Gastrocnemius medialis (tissue), 4 donors: ENCODE measurements at regions of chr2 and their contacts with region 1.

Region 1: DNA sequence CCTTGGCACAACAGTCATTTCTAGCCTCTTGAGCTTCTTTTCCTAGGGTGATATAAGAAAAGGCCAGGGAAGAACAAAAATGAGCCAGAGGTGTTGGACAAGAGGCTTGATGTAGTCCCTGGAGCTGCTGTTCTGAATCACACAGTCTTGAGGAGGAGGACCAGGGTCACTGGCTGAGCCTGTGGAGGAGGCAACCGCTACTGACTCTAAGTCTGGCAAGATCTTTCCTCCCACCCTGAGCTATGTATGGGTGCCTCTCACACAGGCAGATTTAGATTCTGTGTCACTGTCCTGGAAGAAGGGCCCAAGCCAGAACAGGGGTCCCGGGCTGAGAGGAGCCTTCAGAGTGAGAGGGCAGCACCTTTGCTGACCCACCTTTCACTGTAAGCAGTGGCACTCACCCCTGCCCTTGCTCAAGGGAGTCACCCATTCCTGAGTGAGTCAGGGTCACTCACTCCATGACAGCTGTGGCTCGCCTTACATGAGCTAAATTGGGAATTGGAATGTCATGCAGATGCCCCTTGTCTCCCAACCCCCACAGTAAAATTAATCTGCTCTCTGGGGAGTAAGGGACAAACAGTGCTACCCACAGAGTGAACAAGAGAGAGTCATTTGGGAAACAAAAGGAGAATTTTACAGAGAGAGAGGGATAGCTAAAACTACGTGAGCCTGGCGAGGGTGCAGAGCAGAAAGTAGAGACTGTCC is at the start of gene TRIM54:
- DNase-seq: peak; percentile 89 to 96
- ATAC-seq: peak; percentile 75 to 77
- H3K4me3 ChIP-seq: peak within 1 kb of the TSS; percentile 59 to 84 (median 75)
- H3K27ac ChIP-seq: peak within 1 kb of the TSS; percentile 88 to 99 (median 98)
- H3K4me1 ChIP-seq: peaks cover 29 to 30% of the 10 kb centered on the region in 2 donors
- H3K27me3 ChIP-seq: no peaks in the 10 kb centered on the region
- CTCF ChIP-seq: peak in 1 of 5 experiments; percentile 23
- POLR2A ChIP-seq: peak; percentile 89 to 94
- total RNA-seq, gene TRIM54: 219 to 554 (median 427) TPM

Region 2: DNA sequence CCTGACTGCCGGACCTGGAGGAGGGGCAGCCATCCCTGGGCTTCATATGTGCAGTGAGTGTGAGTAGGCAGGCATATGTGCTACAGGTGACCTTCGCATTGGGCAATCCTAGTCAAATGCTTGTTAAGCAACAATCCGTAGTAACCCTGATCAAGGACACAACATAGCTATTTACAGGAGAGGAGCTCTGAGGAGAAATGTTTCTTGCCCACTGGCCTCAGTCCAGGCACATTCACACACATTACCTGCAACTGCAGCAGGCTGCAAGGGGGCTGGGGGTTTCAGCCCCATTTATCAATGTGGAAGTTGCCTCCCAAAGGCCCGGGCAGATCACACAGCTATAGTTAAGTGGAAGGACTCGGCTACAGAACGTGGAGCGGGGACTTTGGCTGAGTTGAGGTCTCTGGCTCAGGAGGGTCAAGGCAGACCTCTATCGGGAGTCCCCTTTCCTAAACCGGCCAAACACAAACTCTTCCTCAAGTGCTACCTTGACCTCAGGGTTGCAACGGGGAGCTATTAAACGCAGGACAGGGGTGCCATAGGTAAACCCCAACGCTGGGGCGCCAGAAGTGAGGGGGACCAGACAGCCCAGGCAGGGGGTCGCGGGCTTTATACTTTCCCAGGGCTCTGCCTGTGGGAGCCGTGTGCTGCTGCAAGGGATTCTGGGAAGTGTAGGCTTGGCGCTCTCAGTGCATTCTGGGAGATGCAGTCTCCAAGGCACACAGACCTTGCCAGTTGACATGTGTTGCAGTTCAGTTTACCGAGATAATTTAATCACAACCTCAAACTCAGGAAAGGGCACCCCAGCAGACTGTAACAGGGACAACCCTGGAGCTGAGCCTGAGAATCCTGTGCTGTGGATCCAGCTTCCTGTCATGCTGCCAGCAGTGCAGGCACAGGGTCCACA is 186.0 kb before region 1 on chr2:
- in situ Hi-C with region 1: loop called in 3 of 4 experiments (anchors 10 kb)
- intact Hi-C with region 1: no loop called
- DNase-seq: peak; percentile 50 to 72
- ATAC-seq: peak; percentile 86 to 93
- H3K4me3 ChIP-seq: peak overlapping the region; percentile 41 to 59 (median 54)
- H3K27ac ChIP-seq: peak overlapping the region; percentile 69 to 78 (median 71)
- H3K4me1 ChIP-seq: peaks cover 5 to 8% of the 10 kb centered on the region in 2 donors
- H3K27me3 ChIP-seq: no peaks in the 10 kb centered on the region
- CTCF ChIP-seq: no peak
- POLR2A ChIP-seq: no peak

Region 3: DNA sequence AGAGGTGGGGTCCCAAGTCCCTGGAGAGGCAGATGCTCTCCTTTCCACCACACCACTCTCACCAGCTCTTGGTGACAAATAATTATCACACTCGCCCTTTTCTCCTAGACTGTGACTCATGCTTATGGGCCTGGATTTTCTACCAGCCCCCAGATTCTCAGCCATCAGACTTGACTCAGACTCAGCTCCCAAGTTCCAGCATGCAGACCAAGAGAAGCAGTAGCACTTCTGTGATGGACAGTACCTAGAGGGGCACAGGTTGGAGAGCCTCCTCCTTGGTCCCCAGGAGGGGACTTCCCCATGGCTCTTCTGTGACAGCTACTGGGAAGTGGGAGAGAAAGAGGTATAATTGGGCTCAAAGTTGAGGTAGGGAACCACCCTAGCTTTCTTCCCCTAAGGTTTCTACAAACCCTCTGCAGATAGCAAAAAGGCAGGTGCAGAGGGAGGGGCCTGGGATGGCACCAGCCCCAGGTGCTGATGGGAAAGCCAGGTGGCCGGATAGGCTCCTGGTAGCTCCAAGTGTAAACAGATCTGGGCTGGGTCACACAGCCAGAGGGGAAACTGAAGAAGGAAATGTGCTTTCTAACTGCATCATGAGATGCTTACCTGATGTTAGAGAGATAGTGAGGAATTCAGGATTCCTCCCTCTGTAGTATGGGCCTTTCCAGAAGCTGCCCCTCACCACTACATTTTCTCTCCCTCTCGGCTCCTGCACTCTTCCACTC is 129.1 kb before region 1 on chr2:
- in situ Hi-C with region 1: no loop called
- intact Hi-C with region 1: no loop called
- DNase-seq: no peak
- ATAC-seq: no peak
- H3K4me3 ChIP-seq: no peak overlapping the region
- H3K27ac ChIP-seq: no peak overlapping the region
- H3K4me1 ChIP-seq: no peaks in the 10 kb centered on the region
- H3K27me3 ChIP-seq: no peaks in the 10 kb centered on the region
- CTCF ChIP-seq: no peak
- POLR2A ChIP-seq: no peak

Region 4: DNA sequence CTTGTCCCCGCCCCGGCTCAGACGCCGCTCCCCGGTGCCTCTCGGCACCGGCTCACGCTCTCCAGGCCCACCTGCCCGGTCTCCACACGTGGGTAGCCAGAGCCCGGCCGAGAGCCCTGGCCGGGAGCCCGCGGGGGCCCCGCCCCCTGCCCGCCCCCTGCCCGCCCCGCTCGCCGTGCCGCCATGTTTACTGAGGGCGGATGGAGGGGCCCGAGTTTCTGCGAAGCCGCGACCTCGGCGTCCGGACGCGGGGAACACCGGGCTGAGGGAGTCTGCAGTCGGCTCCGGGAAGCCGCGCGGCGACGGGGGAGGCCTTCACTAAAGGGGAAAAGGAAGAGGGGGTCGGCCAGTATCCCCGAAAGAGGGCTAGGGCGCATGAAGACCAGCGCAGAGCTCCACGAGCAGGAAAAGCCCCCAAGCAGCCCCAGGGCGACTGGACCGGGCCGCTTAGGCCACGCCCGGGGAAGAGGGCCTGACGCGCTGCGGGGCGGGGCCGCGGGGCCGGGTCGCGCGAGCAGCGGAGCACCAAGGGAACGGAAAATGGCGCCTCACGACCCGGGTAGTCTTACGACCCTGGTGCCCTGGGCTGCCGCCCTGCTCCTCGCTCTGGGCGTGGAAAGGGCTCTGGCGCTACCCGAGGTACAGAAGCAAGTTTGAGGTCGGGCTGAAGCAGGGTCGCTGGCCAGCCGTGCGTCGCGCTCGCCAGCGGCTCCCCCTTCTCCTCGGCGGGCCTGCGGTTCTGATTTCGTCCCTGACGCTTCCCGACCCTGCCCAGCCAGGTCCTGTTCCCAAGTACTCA is 70.0 kb before region 1 on chr2 and contains the starts of genes ATRAID and SLC5A6:
- in situ Hi-C with region 1: no loop called
- intact Hi-C with region 1: loop called (anchors 5 kb)
- DNase-seq: peak; percentile 81 to 84
- ATAC-seq: peak; percentile 90 to 92
- H3K4me3 ChIP-seq: peak within 1 kb of the TSS; percentile 83 to 94 (median 87)
- H3K27ac ChIP-seq: peak within 1 kb of the TSS; percentile 94 to 99 (median 98)
- H3K4me1 ChIP-seq: peaks cover 15 to 18% of the 10 kb centered on the region in 2 donors
- H3K27me3 ChIP-seq: no peaks in the 10 kb centered on the region
- CTCF ChIP-seq: no peak
- POLR2A ChIP-seq: peak; percentile 87 to 89
- total RNA-seq, gene ATRAID: 131 to 203 (median 171) TPM
- total RNA-seq, gene SLC5A6: 19.0 to 46.5 (median 32.5) TPM

Region 5: GRCh38 chr2:27264753-27265535 is 17.1 kb before region 1 on chr2:
- in situ Hi-C with region 1: no loop called
- intact Hi-C with region 1: loop called (anchors 1 kb)
- DNase-seq: no peak
- ATAC-seq: peak; percentile 29 to 34
- H3K4me3 ChIP-seq: peak overlapping the region; percentile 18 to 78 (median 46)
- H3K27ac ChIP-seq: no peak overlapping the region
- H3K4me1 ChIP-seq: peaks cover 25 to 26% of the 10 kb centered on the region in 2 donors
- H3K27me3 ChIP-seq: peaks cover 65 to 68% (median 66%) of the 10 kb centered on the region in 3 donors
- CTCF ChIP-seq: peak; percentile 39 to 60 (median 46)
- POLR2A ChIP-seq: no peak

Region 6: DNA sequence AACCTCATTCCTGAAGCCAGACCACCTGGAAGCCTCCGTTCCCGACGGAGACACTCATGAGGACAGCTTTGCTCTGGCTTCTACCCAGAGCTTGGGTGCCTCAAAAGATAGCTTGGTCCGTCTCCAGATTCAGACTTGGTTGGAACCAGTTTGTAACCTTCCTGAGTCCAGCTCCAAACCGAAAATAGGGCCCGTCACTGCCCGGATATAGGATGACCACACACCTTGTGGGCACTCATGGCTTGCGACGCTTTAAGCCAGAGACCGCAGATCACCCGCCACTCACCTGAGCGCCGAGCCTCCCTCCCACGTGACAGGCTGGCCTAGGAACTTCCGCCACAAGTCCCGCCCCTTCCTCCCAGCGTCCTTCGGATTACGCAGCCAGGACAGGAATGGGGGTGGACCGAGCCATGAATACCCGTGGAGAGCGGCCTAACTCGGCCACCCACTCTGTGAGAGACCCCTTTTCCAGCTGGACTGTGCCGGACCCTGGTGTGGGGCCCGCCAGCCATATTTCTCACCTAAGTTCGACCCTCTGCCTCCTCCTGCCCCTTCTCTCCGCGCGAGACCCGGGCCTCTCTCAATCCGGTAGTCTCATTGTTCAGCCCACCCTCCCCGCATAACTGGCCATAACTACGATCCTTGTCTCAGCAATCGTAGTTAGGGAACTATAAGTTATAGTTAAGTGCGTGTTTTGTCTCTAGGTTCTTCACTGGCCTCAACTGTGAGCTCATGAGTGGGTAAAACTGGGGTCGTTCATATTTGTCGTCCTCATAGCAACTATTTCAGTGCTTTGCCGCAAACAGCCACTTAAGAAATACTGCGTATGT is 41.0 kb after region 1 on chr2 and contains the start of gene MPV17:
- in situ Hi-C with region 1: no loop called
- intact Hi-C with region 1: loop called (anchors 2 kb)
- DNase-seq: peak; percentile 93 to 96
- ATAC-seq: peak; percentile 60 to 61
- H3K4me3 ChIP-seq: peak within 1 kb of the TSS; percentile 80 to 89 (median 82)
- H3K27ac ChIP-seq: peak within 1 kb of the TSS; percentile 95 to 100 (median 98)
- H3K4me1 ChIP-seq: peaks cover 37 to 40% of the 10 kb centered on the region in 2 donors
- H3K27me3 ChIP-seq: no peaks in the 10 kb centered on the region
- CTCF ChIP-seq: peak in 1 of 5 experiments; percentile 20
- POLR2A ChIP-seq: peak; percentile 86 to 91
- total RNA-seq, gene MPV17: 9.9 to 16.0 (median 11.5) TPM

Region 7: DNA sequence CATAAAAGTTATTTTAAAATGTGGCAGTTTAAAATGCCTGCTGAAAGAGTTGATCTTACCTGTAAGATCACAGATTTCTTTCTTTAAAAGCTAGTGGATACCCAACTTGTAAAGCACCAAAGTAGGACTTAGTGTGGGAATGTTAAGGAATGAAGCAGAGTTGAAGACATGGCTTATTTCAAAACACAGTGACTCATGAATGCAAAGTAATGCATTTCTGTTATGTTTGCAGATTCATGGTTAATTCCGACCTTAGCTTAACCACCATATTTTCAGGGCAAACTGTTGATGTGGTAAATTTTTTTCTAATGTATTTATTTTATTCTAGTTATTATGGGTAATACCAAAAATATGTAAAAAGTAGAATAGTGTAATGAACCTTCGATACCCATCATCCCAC is 903.9 kb after region 1 on chr2:
- in situ Hi-C with region 1: no loop called
- intact Hi-C with region 1: no loop called
- DNase-seq: no peak
- ATAC-seq: no peak
- H3K4me3 ChIP-seq: no peak overlapping the region
- H3K27ac ChIP-seq: no peak overlapping the region
- H3K4me1 ChIP-seq: peaks cover 3 to 11% of the 10 kb centered on the region in 2 donors
- H3K27me3 ChIP-seq: no peaks in the 10 kb centered on the region
- CTCF ChIP-seq: no peak
- POLR2A ChIP-seq: no peak